PC-3 (cell line): ENCODE measurements at regions of chr10 and their contacts with region 1.

Region 1: DNA sequence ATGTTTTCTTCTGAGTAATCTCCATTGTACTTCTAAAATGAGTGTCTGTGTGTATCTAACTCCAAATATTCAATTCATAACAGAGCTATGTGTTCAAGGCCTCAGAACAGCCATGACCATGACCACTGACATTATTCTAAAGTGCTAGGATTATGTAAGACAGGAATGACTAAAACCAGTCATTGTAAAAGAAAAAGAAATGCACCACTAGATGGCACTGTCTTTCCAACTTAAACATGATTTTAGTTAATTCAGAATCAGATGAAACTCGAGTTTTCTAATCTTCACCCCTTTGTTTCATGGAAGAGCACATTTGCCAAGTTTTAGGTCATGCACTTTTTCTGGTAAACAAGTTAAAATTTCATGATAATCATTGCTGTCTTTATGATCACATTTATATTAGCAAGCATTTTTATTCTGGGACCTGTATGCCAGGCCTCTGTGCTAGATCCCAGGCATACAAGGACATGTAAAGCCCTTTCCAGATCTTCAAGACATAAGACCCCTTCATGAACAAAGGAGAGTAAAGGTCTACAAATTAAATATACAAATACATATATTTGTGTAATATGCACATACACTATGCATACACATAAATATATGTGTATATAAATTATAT is 26.1 kb upstream of the RSU1 start:
- DNase-seq: peak; percentile 83
- ATAC-seq: peak; percentile 64
- H3K4me3 ChIP-seq: no peak overlapping the region
- H3K27ac ChIP-seq: no peak overlapping the region
- H3K4me1 ChIP-seq: no peaks in the 10 kb centered on the region; the same call in 1 of the 2 replicates
- H3K27me3 ChIP-seq: no peaks in the 10 kb centered on the region
- CTCF ChIP-seq: peak; percentile 58

Region 2: DNA sequence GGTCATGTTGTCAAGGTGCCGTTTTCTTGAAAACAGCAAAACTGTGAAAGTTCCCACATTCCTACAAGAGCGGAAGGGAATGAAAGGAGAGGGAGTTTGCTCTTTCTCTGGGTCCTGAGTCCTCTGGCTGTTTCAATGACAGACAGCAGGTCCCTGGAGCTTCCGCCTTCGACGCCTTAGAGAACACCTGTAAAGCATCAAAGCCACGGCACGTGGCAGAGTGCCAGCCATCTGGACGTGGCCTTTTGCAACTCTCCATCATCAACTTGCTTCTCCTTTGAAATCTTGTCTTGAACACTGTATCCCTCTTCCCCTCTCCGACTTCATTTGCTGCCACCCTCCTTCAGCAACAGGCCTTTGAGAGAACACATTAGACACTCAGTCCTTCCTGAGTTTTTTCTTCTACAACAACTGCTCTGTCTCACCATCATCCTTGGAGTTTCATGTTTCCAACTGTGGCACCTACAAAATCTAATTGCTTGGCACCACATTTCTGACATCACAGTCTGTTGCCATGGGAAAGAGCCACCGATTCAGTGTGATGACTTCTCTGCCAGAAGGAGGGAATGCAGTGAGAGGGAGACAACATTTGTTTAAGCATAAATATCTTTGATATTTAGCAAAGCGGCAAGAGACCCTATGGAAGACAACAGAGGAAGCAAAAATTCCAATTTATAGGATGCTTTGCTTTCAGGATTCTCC is 611.5 kb before region 1 on chr10:
- CTCF ChIA-PET with region 1: no interaction called
- POLR2A ChIA-PET with region 1: no interaction called
- intact Hi-C with region 1: no loop called
- DNase-seq: no peak
- ATAC-seq: no peak
- H3K4me3 ChIP-seq: no peak overlapping the region
- H3K27ac ChIP-seq: no peak overlapping the region
- H3K4me1 ChIP-seq: no peaks in the 10 kb centered on the region
- H3K27me3 ChIP-seq: no peaks in the 10 kb centered on the region
- CTCF ChIP-seq: no peak

Region 3: GRCh38 chr10:16828114-16828568 is 15.2 kb before region 1 on chr10:
- CTCF ChIA-PET with region 1: no interaction called
- POLR2A ChIA-PET with region 1: no interaction called
- intact Hi-C with region 1: loop called (anchors 1 kb)
- DNase-seq: peak; percentile 74
- ATAC-seq: peak; percentile 68
- H3K4me3 ChIP-seq: no peak overlapping the region
- H3K27ac ChIP-seq: peak overlapping the region; percentile 57
- H3K4me1 ChIP-seq: peaks cover 12% of the 10 kb centered on the region; the same call in 1 of the 2 replicates
- H3K27me3 ChIP-seq: no peaks in the 10 kb centered on the region
- CTCF ChIP-seq: peak; percentile 49; the same call in 1 of the 2 replicates

Region 4: GRCh38 chr10:17023386-17024298 is 180.3 kb after region 1 on chr10:
- CTCF ChIA-PET with region 1: no interaction called
- POLR2A ChIA-PET with region 1: no interaction called
- intact Hi-C with region 1: loop called (anchors 10 kb)
- DNase-seq: peak; percentile 88
- ATAC-seq: peak; percentile 85
- H3K4me3 ChIP-seq: no peak overlapping the region
- H3K27ac ChIP-seq: peak overlapping the region; percentile 92
- H3K4me1 ChIP-seq: peaks cover 41% of the 10 kb centered on the region
- H3K27me3 ChIP-seq: no peaks in the 10 kb centered on the region
- CTCF ChIP-seq: no peak

Region 5: GRCh38 chr10:17175551-17175950 is 332.2 kb after region 1 on chr10:
- CTCF ChIA-PET with region 1: no interaction called
- POLR2A ChIA-PET with region 1: no interaction called
- intact Hi-C with region 1: loop called (anchors 1 kb)
- DNase-seq: no peak
- ATAC-seq: no peak
- H3K4me3 ChIP-seq: no peak overlapping the region
- H3K27ac ChIP-seq: no peak overlapping the region
- H3K4me1 ChIP-seq: no peaks in the 10 kb centered on the region
- H3K27me3 ChIP-seq: no peaks in the 10 kb centered on the region
- CTCF ChIP-seq: no peak

Region 6: GRCh38 chr10:17257466-17258321 is 414.3 kb after region 1 on chr10:
- CTCF ChIA-PET with region 1: no interaction called
- POLR2A ChIA-PET with region 1: no interaction called
- intact Hi-C with region 1: loop called (anchors 2 kb)
- DNase-seq: peak; percentile 63
- ATAC-seq: peak; percentile 79
- H3K4me3 ChIP-seq: peak overlapping the region; percentile 35; the same call in 1 of the 2 replicates
- H3K27ac ChIP-seq: no peak overlapping the region
- H3K4me1 ChIP-seq: no peaks in the 10 kb centered on the region
- H3K27me3 ChIP-seq: no peaks in the 10 kb centered on the region
- CTCF ChIP-seq: peak; percentile 66